ENCODE measurements at regions of chr7 and their contacts with region 1.

Region 1: DNA sequence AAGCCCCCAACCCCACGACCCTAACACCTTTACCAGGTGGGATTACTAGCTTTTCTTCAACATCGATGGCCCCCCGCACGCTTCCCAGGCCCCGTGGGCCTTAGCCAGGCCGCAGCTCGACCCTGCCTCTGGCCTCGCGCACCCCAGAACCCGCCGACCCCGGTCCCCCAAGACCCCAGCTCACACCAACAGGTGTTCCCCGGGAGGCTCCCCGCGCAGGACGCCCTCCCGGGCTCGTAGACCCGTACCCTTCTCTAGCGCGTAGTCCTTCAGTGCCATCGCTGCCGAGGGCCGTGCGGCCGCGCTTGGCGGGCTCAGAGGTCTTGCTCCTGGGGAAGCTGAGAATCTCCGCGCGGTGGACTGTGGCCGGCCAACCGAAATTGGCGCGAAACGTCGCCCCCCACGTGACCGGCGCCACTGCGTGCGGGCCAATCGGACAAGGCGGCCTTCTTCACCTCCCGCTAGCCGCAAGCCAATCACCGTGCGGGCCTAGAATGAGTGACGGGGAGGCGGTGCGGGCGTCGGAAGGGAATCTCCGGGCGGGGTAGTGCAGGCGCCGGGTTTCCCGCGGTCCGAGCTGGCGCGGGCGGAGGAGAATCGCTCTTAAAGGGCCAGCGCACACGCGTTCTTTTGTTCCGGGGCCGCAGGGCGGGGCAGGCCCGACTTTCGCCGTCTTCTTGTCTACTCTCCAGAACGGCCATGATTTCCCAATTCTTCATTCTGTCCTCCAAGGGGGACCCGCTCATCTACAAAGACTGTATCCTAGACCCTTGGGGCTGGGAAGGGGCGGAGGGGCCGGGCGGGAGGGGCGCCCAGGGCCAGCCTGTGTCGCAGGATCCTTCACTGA is at the starts of genes AP4M1 and MCM7:
- DNase-seq: peak; percentile 94 to 97 (median 95)
- H3K4me3 ChIP-seq: peak within 1 kb of the TSS; percentile 96
- H3K4me3 Mint-ChIP-seq: peak within 1 kb of the TSS; percentile 90 to 97 (median 94)
- H3K27ac ChIP-seq: peak within 1 kb of the TSS; percentile 85
- H3K27ac Mint-ChIP-seq: peak within 1 kb of the TSS; percentile 94 to 100 (median 96)
- H3K4me1 ChIP-seq: peaks cover 21% of the 10 kb centered on the region
- H3K4me1 Mint-ChIP-seq: peaks cover 39 to 48% (median 45%) of the 10 kb centered on the region in 3 donors
- H3K27me3 ChIP-seq: no peaks in the 10 kb centered on the region
- H3K27me3 Mint-ChIP-seq: peaks cover 0 to 9% of the 10 kb centered on the region in 2 donors
- total RNA-seq, gene AP4M1: 13.8 to 17.3 TPM
- total RNA-seq, gene MCM7: 440 to 452 TPM

Region 2: DNA sequence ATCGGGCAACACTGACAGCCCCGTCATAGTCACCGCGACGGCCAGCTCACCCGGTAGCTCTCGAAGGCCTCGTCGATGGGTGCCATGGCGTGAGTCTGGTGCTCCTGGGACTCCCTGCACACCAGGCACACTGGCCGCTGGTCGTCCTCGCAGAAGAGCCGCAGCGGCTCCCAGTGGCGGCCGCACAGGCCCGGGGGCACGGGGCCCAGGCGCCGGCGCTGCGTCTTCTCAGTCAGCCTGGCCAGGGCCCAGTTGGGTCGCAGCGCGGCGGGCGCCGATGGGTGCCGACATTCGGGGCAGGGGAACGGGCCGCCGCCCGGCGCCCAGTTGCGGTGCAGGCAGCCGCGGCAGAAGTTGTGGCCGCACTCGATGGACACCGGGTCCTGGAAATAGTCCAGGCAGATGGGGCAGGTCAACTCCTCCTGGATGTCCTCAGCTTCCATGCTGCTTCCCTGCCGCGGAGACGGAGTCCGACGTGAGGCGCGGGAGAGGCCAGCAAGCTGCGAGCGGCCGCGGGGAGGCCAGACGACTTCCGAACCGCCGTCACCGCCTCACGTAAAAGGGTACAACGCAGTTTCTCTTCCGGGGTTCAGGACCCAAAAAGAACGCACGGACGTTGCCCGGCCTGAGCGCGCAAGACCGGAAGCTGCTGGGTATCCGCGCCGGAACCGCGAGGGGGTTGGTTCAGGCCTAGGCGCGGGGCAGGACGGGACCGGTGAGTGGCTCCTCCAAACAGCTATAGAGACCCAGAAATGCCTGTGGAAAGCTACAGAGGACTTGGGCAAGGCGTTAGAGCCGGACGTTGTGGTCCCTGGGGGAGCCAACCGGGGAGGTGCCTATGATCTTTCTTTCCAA is 182.1 kb before region 1 on chr7 and contains the start of gene TRIM4:
- CTCF ChIA-PET with region 1: interaction called, 3 read pairs
- POLR2A ChIA-PET with region 1: interaction called, 13 read pairs
- DNase-seq: peak; percentile 78 to 92 (median 88)
- H3K4me3 ChIP-seq: peak within 1 kb of the TSS; percentile 97
- H3K4me3 Mint-ChIP-seq: peak within 1 kb of the TSS; percentile 92 to 98 (median 96)
- H3K27ac ChIP-seq: peak within 1 kb of the TSS; percentile 94
- H3K27ac Mint-ChIP-seq: peak within 1 kb of the TSS; percentile 93 to 99 (median 98)
- H3K4me1 ChIP-seq: peaks cover 48% of the 10 kb centered on the region
- H3K4me1 Mint-ChIP-seq: peaks cover 47 to 59% (median 57%) of the 10 kb centered on the region in 3 donors
- H3K27me3 ChIP-seq: no peaks in the 10 kb centered on the region
- H3K27me3 Mint-ChIP-seq: peaks cover 0 to 6% of the 10 kb centered on the region in 2 donors
- total RNA-seq, gene TRIM4: 30.0 to 31.0 TPM

Region 3: GRCh38 chr7:100049441-100050311 is 51.6 kb before region 1 on chr7 and contains the start of gene ZSCAN21:
- CTCF ChIA-PET with region 1: no interaction called
- POLR2A ChIA-PET with region 1: interaction called, 12 read pairs
- DNase-seq: peak; percentile 70 to 85 (median 76)
- H3K4me3 ChIP-seq: peak within 1 kb of the TSS; percentile 75
- H3K4me3 Mint-ChIP-seq: peak within 1 kb of the TSS; percentile 94 to 99 (median 94)
- H3K27ac ChIP-seq: peak within 1 kb of the TSS; percentile 81
- H3K27ac Mint-ChIP-seq: peak within 1 kb of the TSS; percentile 95 to 98 (median 97)
- H3K4me1 ChIP-seq: peaks cover 6% of the 10 kb centered on the region
- H3K4me1 Mint-ChIP-seq: peaks cover 15 to 31% (median 18%) of the 10 kb centered on the region in 3 donors
- H3K27me3 ChIP-seq: no peaks in the 10 kb centered on the region
- H3K27me3 Mint-ChIP-seq: peaks cover 0 to 4% of the 10 kb centered on the region in 2 donors
- total RNA-seq, gene ZSCAN21: 10.7 to 11.3 TPM

Region 4: DNA sequence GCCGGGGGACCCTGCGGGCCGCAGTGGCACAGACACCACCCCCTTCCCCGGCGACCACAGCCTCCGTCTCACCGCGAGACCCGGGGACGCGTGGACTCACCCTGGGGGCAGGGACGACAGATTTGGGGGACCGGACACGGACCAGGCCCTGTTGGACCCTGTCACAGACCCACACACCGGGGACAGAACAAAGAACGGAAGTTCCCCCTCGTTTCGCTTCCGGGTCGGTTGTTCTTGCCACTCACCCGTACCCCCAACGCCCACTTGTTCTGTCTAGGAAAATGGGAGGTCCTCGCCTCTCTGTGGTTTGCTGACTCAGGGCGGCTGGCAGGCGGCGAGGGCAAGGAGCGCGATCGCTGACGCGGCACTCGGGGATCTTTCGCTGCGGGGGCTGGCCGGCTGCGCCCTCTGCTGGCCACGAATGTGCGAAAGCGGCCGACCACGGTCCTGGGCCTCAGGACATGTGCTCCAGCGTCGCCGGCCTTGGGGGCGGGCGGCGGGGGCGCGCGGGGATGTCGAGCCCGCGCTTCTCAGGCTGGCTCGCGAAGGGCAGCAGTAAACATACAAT is 19.6 kb before region 1 on chr7 and contains the start of gene ZNF3:
- CTCF ChIA-PET with region 1: interaction called, 19 read pairs
- POLR2A ChIA-PET with region 1: no interaction called
- DNase-seq: peak; percentile 95 to 99 (median 97)
- H3K4me3 ChIP-seq: peak within 1 kb of the TSS; percentile 92
- H3K4me3 Mint-ChIP-seq: peak within 1 kb of the TSS; percentile 84 to 96 (median 93)
- H3K27ac ChIP-seq: peak within 1 kb of the TSS; percentile 84
- H3K27ac Mint-ChIP-seq: peak within 1 kb of the TSS; percentile 73 to 98 (median 92)
- H3K4me1 ChIP-seq: peaks cover 24% of the 10 kb centered on the region
- H3K4me1 Mint-ChIP-seq: peaks cover 33 to 45% (median 42%) of the 10 kb centered on the region in 3 donors
- H3K27me3 ChIP-seq: no peaks in the 10 kb centered on the region
- H3K27me3 Mint-ChIP-seq: peaks cover 0 to 3% of the 10 kb centered on the region in 2 donors
- total RNA-seq, gene ZNF3: 26.8 to 27.9 TPM

Region 5: GRCh38 chr7:100088621-100089457 is 12.4 kb before region 1 on chr7 and contains the start of gene COPS6:
- CTCF ChIA-PET with region 1: interaction called, 19 read pairs
- POLR2A ChIA-PET with region 1: interaction called, 17 read pairs
- DNase-seq: peak; percentile 82 to 90 (median 87)
- H3K4me3 ChIP-seq: peak within 1 kb of the TSS; percentile 93
- H3K4me3 Mint-ChIP-seq: peak within 1 kb of the TSS; percentile 83 to 95 (median 90)
- H3K27ac ChIP-seq: peak within 1 kb of the TSS; percentile 84
- H3K27ac Mint-ChIP-seq: peak within 1 kb of the TSS; percentile 90 to 98 (median 94)
- H3K4me1 ChIP-seq: peaks cover 21% of the 10 kb centered on the region
- H3K4me1 Mint-ChIP-seq: peaks cover 10 to 33% (median 21%) of the 10 kb centered on the region in 3 donors
- H3K27me3 ChIP-seq: no peaks in the 10 kb centered on the region
- H3K27me3 Mint-ChIP-seq: peaks cover 0 to 9% of the 10 kb centered on the region in 2 donors
- total RNA-seq, gene COPS6: 110 to 111 TPM

Region 6: GRCh38 chr7:100119701-100120467 is 18.6 kb after region 1 on chr7:
- CTCF ChIA-PET with region 1: interaction called, 17 read pairs
- POLR2A ChIA-PET with region 1: interaction called, 50 read pairs
- DNase-seq: peak; percentile 58 to 83 (median 71)
- H3K4me3 ChIP-seq: peak overlapping the region; percentile 99
- H3K4me3 Mint-ChIP-seq: peak overlapping the region; percentile 95 to 99 (median 97)
- H3K27ac ChIP-seq: peak overlapping the region; percentile 94
- H3K27ac Mint-ChIP-seq: peak overlapping the region; percentile 96 to 100 (median 99)
- H3K4me1 ChIP-seq: peaks cover 21% of the 10 kb centered on the region
- H3K4me1 Mint-ChIP-seq: peaks cover 29 to 41% (median 39%) of the 10 kb centered on the region in 3 donors
- H3K27me3 ChIP-seq: no peaks in the 10 kb centered on the region
- H3K27me3 Mint-ChIP-seq: no peaks in the 10 kb centered on the region

Region 7: DNA sequence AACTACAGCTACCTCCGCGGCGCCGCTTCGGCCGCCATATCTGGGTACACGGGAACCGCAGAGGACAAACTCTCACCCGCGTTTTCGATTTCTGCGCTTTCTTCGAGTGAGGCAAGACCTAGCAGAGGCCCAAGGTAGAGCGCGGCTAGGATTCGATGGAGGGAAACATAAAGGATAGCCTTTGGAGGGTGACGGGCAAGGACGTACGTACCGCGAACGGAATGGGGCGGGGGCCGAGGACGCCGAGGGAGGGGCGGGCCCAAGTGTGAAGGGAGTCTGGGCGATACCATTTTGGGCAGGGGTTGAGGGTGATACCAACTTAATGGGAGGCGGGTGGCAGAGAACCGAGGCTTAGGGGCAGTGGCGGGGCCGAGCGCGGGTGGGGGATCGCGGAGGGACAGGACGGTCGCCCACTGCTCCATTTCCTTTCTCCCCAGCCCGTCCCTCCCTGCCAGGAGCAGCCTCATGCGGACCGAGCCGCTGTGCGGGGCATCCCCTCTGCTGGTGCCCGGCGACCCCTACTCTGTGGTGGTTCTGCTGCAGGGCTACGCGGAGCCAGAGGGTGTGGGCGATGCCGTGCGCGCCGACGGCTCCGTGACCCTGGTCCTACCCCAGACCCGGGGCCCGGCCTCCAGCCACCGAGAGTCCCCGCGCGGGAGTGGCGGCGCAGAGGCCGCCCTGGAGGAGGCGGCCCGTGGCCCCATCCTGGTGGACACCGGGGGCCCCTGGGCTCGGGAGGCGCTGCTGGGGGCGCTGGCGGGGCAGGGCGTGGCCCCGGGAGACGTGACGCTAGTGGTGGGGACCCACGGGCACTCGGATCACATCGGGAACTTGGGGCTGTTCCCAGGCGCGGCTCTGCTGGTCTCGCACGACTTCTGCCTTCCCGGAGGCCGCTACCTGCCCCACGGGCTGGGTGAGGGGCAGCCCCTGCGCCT is 26.0 kb after region 1 on chr7 and contains the start of gene MBLAC1:
- CTCF ChIA-PET with region 1: interaction called, 19 read pairs
- POLR2A ChIA-PET with region 1: interaction called, 50 read pairs
- DNase-seq: peak; percentile 88 to 93 (median 90)
- H3K4me3 ChIP-seq: peak within 1 kb of the TSS; percentile 90
- H3K4me3 Mint-ChIP-seq: peak within 1 kb of the TSS; percentile 94 to 100 (median 99)
- H3K27ac ChIP-seq: peak within 1 kb of the TSS; percentile 98
- H3K27ac Mint-ChIP-seq: peak within 1 kb of the TSS; percentile 96 to 100 (median 98)
- H3K4me1 ChIP-seq: peaks cover 29% of the 10 kb centered on the region
- H3K4me1 Mint-ChIP-seq: peaks cover 27 to 57% (median 34%) of the 10 kb centered on the region in 3 donors
- H3K27me3 ChIP-seq: no peaks in the 10 kb centered on the region
- H3K27me3 Mint-ChIP-seq: peaks cover 0 to 2% of the 10 kb centered on the region in 2 donors
- total RNA-seq, gene MBLAC1: 4.4 TPM

Measured in CD8-positive, alpha-beta memory T cell (primary cell).